Panc1 (cell line): ENCODE measurements at regions of chr7 and their contacts with region 1.

Region 1: GRCh38 chr7:140242057-140243031 is 65.6 kb upstream of the KDM7A start:
- DNase-seq: no peak
- ATAC-seq: no peak
- H3K4me3 ChIP-seq: no peak overlapping the region
- H3K27ac ChIP-seq: no peak overlapping the region
- H3K4me1 ChIP-seq: no peaks in the 10 kb centered on the region
- H3K27me3 ChIP-seq: no peaks in the 10 kb centered on the region
- CTCF ChIP-seq: no peak

Region 2: GRCh38 chr7:140260352-140261104 is 18.2 kb after region 1 on chr7:
- CTCF ChIA-PET with region 1: no interaction called
- POLR2A ChIA-PET with region 1: interaction called, 11 read pairs
- in situ Hi-C with region 1: no loop called
- intact Hi-C with region 1: no loop called
- DNase-seq: no peak
- ATAC-seq: no peak
- H3K4me3 ChIP-seq: no peak overlapping the region
- H3K27ac ChIP-seq: no peak overlapping the region
- H3K4me1 ChIP-seq: no peaks in the 10 kb centered on the region
- H3K27me3 ChIP-seq: no peaks in the 10 kb centered on the region
- CTCF ChIP-seq: no peak